Naive thymus-derived CD4-positive, alpha-beta T cell (primary cell): ENCODE measurements at regions of chr22 and their contacts with region 1.

Region 1: GRCh38 chr22:20116951-20117645 is at the start of gene TRMT2A:
- DNase-seq: peak; percentile 93 to 98 (median 97)
- ATAC-seq: peak; percentile 93
- H3K4me3 ChIP-seq: peak within 1 kb of the TSS; percentile 96
- H3K4me3 Mint-ChIP-seq: peak within 1 kb of the TSS; percentile 72 to 98 (median 90)
- H3K27ac ChIP-seq: peak within 1 kb of the TSS; percentile 96
- H3K27ac Mint-ChIP-seq: peak within 1 kb of the TSS; percentile 80 to 97 (median 95)
- H3K4me1 ChIP-seq: peaks cover 23 to 24% of the 10 kb centered on the region in 2 donors
- H3K4me1 Mint-ChIP-seq: peaks cover 20 to 48% (median 39%) of the 10 kb centered on the region in 7 donors
- H3K27me3 ChIP-seq: no peaks in the 10 kb centered on the region
- H3K27me3 Mint-ChIP-seq: peaks cover 0 to 2% (median 0%) of the 10 kb centered on the region in 5 donors
- total RNA-seq, gene TRMT2A: 92.0 to 134 (median 95.8) TPM

Region 2: GRCh38 chr22:19143967-19144400 is 973.1 kb before region 1 on chr22:
- CTCF ChIA-PET with region 1: no interaction called
- POLR2A ChIA-PET with region 1: no interaction called
- intact Hi-C with region 1: loop called in 1 of 2 experiments (anchors 10 kb)
- DNase-seq: peak in 6 of 9 donors; percentile 8 to 40 (median 26)
- ATAC-seq: no peak
- H3K4me3 ChIP-seq: peak overlapping the region; percentile 83
- H3K4me3 Mint-ChIP-seq: peak overlapping the region; percentile 84 to 99 (median 98)
- H3K27ac ChIP-seq: peak overlapping the region; percentile 93
- H3K27ac Mint-ChIP-seq: peak overlapping the region; percentile 91 to 99 (median 97)
- H3K4me1 ChIP-seq: no peaks in the 10 kb centered on the region
- H3K4me1 Mint-ChIP-seq: peaks cover 8 to 32% (median 18%) of the 10 kb centered on the region in 7 donors
- H3K27me3 ChIP-seq: peaks cover 0 to 1% of the 10 kb centered on the region in 2 donors
- H3K27me3 Mint-ChIP-seq: peaks cover 9 to 33% (median 11%) of the 10 kb centered on the region in 5 donors

Region 3: DNA sequence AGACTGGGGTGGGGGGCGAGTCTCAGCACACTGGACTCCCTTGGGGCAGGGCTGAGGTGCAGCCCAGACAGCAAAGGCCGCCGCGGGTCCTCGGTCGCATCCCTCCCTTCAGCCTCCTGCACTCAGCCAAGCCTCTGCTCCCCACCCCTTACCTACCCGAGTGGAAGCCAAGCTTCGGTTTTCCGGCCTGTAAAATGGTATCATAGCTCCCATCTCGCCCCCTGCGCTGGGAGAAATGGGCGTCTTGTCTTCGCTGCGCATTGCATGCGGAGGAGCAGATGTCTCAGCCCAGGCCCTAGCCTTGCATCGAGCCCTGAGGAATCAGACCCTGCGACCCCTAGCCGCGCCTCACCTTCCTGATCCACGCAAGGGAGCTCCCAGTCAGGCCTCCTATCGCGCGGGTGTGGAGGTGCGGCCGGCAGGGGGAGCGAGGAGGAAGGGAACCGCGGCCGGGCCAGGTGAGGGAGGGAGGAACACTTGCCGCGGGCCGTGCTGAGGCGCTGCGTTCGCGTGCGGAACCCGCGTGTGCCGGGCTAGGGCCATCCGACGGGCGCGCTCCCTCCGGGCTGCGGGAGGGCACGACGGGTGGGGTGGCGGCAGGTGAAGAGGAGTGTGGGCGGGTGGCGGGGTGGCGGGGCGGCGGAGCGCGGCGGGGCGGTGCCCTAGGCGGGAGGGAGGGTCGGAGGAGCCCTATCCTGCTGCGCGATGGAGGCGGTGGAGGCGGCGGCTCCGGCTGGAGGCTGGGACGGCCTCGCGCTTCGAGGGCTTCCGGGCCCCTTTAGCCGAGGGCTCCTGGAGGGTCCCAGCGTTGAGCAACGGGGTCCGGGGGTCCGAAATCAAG is 360.6 kb before region 1 on chr22:
- CTCF ChIA-PET with region 1: no interaction called
- POLR2A ChIA-PET with region 1: no interaction called
- intact Hi-C with region 1: no loop called
- DNase-seq: peak; percentile 56 to 79 (median 70)
- ATAC-seq: peak; percentile 79
- H3K4me3 ChIP-seq: peak overlapping the region; percentile 39
- H3K4me3 Mint-ChIP-seq: peak overlapping the region; percentile 62 to 89 (median 74)
- H3K27ac ChIP-seq: no peak overlapping the region
- H3K27ac Mint-ChIP-seq: no peak overlapping the region
- H3K4me1 ChIP-seq: peaks cover 8 to 23% of the 10 kb centered on the region in 2 donors
- H3K4me1 Mint-ChIP-seq: peaks cover 19 to 41% (median 25%) of the 10 kb centered on the region in 7 donors
- H3K27me3 ChIP-seq: peaks cover 0 to 11% of the 10 kb centered on the region in 2 donors
- H3K27me3 Mint-ChIP-seq: peaks cover 39 to 67% (median 53%) of the 10 kb centered on the region in 5 donors

Region 4: GRCh38 chr22:19970479-19971275 is 146.4 kb before region 1 on chr22:
- CTCF ChIA-PET with region 1: no interaction called
- POLR2A ChIA-PET with region 1: no interaction called
- intact Hi-C with region 1: loop called in 1 of 2 experiments (anchors 5 kb)
- DNase-seq: peak; percentile 59 to 83 (median 73)
- ATAC-seq: peak; percentile 81
- H3K4me3 ChIP-seq: no peak overlapping the region
- H3K4me3 Mint-ChIP-seq: peak overlapping the region in 1 of 10 donors; percentile 52
- H3K27ac ChIP-seq: no peak overlapping the region
- H3K27ac Mint-ChIP-seq: peak overlapping the region in 2 of 9 donors; percentile 41
- H3K4me1 ChIP-seq: peaks cover 7 to 11% of the 10 kb centered on the region in 2 donors
- H3K4me1 Mint-ChIP-seq: peaks cover 12 to 35% (median 13%) of the 10 kb centered on the region in 7 donors
- H3K27me3 ChIP-seq: no peaks in the 10 kb centered on the region
- H3K27me3 Mint-ChIP-seq: no peaks in the 10 kb centered on the region

Region 5: DNA sequence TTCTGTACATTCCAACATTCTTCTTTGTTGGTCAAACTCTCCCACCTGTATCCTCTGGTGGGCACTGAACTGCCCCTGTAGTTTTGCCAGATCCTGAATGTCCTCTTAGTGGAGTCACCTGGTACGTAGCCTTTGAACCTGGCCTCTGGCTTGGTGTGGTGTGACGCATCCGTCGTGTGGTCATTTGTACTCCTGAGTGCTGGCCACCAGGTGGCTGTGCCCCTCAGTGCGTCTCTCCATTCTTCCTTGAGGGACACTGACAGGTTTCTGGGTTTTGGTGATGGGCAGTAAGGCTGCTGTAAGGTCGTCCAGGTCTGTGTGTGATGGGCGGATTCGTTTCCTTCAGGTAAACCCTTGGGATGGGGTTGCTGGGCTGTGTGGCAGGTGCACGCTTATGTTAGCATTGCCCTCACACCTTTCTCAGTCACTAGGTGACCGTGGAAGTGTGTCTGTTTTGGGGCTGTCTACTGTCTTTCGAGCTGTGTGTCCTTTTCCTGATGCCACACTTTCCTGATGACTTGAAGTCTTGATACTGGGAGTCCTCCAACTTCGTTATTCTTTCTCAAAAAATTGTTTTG is 14.8 kb before region 1 on chr22:
- CTCF ChIA-PET with region 1: no interaction called
- POLR2A ChIA-PET with region 1: interaction called, 7 read pairs
- intact Hi-C with region 1: loop called (anchors 1 to 2 kb)
- DNase-seq: no peak
- ATAC-seq: no peak
- H3K4me3 ChIP-seq: no peak overlapping the region
- H3K4me3 Mint-ChIP-seq: peak overlapping the region in 2 of 10 donors; percentile 29 to 39
- H3K27ac ChIP-seq: no peak overlapping the region
- H3K27ac Mint-ChIP-seq: peak overlapping the region; percentile 59 to 97 (median 85)
- H3K4me1 ChIP-seq: peaks cover 24 to 29% of the 10 kb centered on the region in 2 donors
- H3K4me1 Mint-ChIP-seq: peaks cover 22 to 52% (median 46%) of the 10 kb centered on the region in 7 donors
- H3K27me3 ChIP-seq: no peaks in the 10 kb centered on the region
- H3K27me3 Mint-ChIP-seq: no peaks in the 10 kb centered on the region

Region 6: GRCh38 chr22:20268279-20269012 is 151.3 kb after region 1 on chr22 and contains the start of gene RTN4R:
- CTCF ChIA-PET with region 1: no interaction called
- POLR2A ChIA-PET with region 1: no interaction called
- intact Hi-C with region 1: no loop called
- DNase-seq: peak in 7 of 9 donors; percentile 41 to 73 (median 52)
- ATAC-seq: peak; percentile 84
- H3K4me3 ChIP-seq: no peak within 1 kb of the TSS
- H3K4me3 Mint-ChIP-seq: peak within 1 kb of the TSS; percentile 47 to 79 (median 74)
- H3K27ac ChIP-seq: peak within 1 kb of the TSS; percentile 8
- H3K27ac Mint-ChIP-seq: peak within 1 kb of the TSS in 1 of 9 donors; percentile 69
- H3K4me1 ChIP-seq: peaks cover 0 to 4% of the 10 kb centered on the region in 2 donors
- H3K4me1 Mint-ChIP-seq: peaks cover 0 to 7% (median 5%) of the 10 kb centered on the region in 7 donors
- H3K27me3 ChIP-seq: no peaks in the 10 kb centered on the region
- H3K27me3 Mint-ChIP-seq: peaks cover 0 to 6% (median 0%) of the 10 kb centered on the region in 5 donors
- total RNA-seq, gene RTN4R: 0.98 to 2.7 (median 1.8) TPM

Region 7: GRCh38 chr22:20298803-20299735 is 182.0 kb after region 1 on chr22:
- CTCF ChIA-PET with region 1: no interaction called
- POLR2A ChIA-PET with region 1: no interaction called
- intact Hi-C with region 1: loop called in 1 of 2 experiments (anchors 1 kb)
- DNase-seq: peak; percentile 80 to 93 (median 92)
- ATAC-seq: peak; percentile 96
- H3K4me3 ChIP-seq: peak overlapping the region; percentile 52
- H3K4me3 Mint-ChIP-seq: peak overlapping the region; percentile 72 to 89 (median 82)
- H3K27ac ChIP-seq: peak overlapping the region; percentile 60
- H3K27ac Mint-ChIP-seq: peak overlapping the region in 6 of 9 donors; percentile 36 to 79 (median 62)
- H3K4me1 ChIP-seq: peaks cover 0 to 3% of the 10 kb centered on the region in 2 donors
- H3K4me1 Mint-ChIP-seq: peaks cover 4 to 11% (median 9%) of the 10 kb centered on the region in 7 donors
- H3K27me3 ChIP-seq: no peaks in the 10 kb centered on the region
- H3K27me3 Mint-ChIP-seq: peaks cover 0 to 27% (median 4%) of the 10 kb centered on the region in 5 donors

Region 8: GRCh38 chr22:20916983-20917810 is 800.1 kb after region 1 on chr22 and contains the start of gene CRKL:
- CTCF ChIA-PET with region 1: no interaction called
- POLR2A ChIA-PET with region 1: no interaction called
- intact Hi-C with region 1: loop called in 1 of 2 experiments (anchors 2 kb)
- DNase-seq: peak; percentile 92 to 96 (median 94)
- ATAC-seq: peak; percentile 98
- H3K4me3 ChIP-seq: peak within 1 kb of the TSS; percentile 87
- H3K4me3 Mint-ChIP-seq: peak within 1 kb of the TSS; percentile 83 to 99 (median 97)
- H3K27ac ChIP-seq: peak within 1 kb of the TSS; percentile 92
- H3K27ac Mint-ChIP-seq: peak within 1 kb of the TSS; percentile 77 to 97 (median 90)
- H3K4me1 ChIP-seq: peaks cover 4 to 12% of the 10 kb centered on the region in 2 donors
- H3K4me1 Mint-ChIP-seq: peaks cover 32 to 50% (median 40%) of the 10 kb centered on the region in 7 donors
- H3K27me3 ChIP-seq: no peaks in the 10 kb centered on the region
- H3K27me3 Mint-ChIP-seq: no peaks in the 10 kb centered on the region
- total RNA-seq, gene CRKL: 38.9 to 82.7 (median 77.8) TPM